GM12878 (cell line): ENCODE measurements at regions of chr3 and their contacts with region 1.

Region 1: GRCh38 chr3:196837819-196838420 is 29.8 kb upstream of the SENP5 start:
- DNase-seq: peak; percentile 20
- ATAC-seq: peak; percentile 96
- H3K4me3 ChIP-seq: no peak overlapping the region
- H3K27ac ChIP-seq: no peak overlapping the region
- H3K4me1 ChIP-seq: no peaks in the 10 kb centered on the region
- H3K27me3 ChIP-seq: no peaks in the 10 kb centered on the region
- CTCF ChIP-seq: peak; percentile 89 to 97 (median 94)
- EP300 ChIP-seq: no peak
- POLR2A ChIP-seq: no peak
- RAD21 ChIP-seq: peak; percentile 96

Region 2: DNA sequence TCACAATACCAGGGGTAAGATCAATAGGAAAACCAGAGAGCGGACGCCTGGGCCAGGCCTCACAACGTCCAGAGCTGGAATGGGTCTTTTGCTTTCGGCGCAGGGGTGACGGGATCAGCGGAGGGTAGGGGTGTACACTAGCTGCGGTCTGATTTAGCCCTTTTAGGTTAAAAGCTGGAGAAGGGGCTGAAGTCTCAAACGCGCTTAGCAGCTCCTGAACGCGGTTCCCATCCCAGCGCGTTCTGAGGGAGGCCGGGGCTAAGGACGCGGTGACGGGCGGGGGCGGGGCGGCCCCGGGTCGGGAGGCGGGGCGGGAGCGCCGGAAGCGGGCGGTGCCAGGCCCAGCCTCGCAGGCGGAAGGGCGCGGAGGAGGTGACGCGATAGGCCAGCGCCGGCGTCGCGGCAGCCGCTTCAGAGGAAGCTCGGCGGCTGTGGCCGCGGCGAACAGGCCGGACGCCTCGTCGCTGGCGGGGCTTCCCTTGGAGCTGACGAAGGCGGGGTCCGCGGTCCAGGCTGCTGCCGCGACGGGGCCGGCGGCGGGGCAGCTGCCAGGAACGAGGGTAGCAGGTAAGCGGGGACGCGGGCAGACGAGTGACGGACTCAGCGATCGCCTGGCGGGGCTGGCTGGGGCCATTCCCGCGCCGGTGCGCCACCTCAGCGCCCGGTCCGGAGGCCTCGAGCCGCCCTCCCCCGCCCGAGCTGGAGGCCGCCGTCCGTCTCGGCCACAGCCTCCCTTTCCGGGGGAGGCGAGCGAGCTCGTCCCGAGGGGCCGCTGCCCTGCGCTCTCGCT is 29.8 kb after region 1 on chr3 and contains the start of gene SENP5:
- CTCF ChIA-PET with region 1: interaction called, 12 read pairs
- POLR2A ChIA-PET with region 1: no interaction called
- RAD21 ChIA-PET with region 1: interaction called, 8 read pairs
- SMC1A ChIA-PET with region 1: interaction called, 5 read pairs
- in situ Hi-C with region 1: no loop called
- intact Hi-C with region 1: no loop called
- DNase-seq: peak; percentile 43
- ATAC-seq: peak; percentile 95
- H3K4me3 ChIP-seq: peak within 1 kb of the TSS; percentile 73
- H3K27ac ChIP-seq: peak within 1 kb of the TSS; percentile 82
- H3K4me1 ChIP-seq: peaks cover 4% of the 10 kb centered on the region; the same call in 1 of the 2 replicates
- H3K27me3 ChIP-seq: no peaks in the 10 kb centered on the region
- CTCF ChIP-seq: no peak
- EP300 ChIP-seq: no peak
- POLR2A ChIP-seq: peak; percentile 100
- RAD21 ChIP-seq: no peak
- polyA plus RNA-seq, gene SENP5: 6.4 to 9.6 TPM

Region 3: DNA sequence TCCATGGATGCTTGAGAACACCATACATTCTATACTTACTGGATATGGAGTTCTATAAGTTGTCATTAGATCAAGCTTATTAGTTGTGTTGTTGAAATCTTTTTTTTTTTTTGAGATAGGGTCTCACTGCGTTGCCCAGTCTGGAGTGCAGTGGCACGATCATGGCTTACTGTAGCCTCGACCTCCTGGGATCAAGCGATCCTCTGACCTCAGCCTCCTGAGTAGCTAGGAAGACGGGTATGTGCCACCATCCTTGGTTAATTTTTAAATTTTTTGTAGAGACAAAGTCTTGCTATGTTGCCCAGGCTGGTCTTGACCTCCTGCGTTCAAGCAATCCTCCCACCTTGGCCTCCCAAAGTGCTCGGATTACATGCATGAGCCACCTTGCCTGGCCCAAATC is 116.9 kb after region 1 on chr3:
- CTCF ChIA-PET with region 1: interaction called, 10 read pairs
- POLR2A ChIA-PET with region 1: interaction called, 3 read pairs
- RAD21 ChIA-PET with region 1: no interaction called
- SMC1A ChIA-PET with region 1: no interaction called
- in situ Hi-C with region 1: no loop called
- intact Hi-C with region 1: no loop called
- DNase-seq: no peak
- ATAC-seq: no peak
- H3K4me3 ChIP-seq: no peak overlapping the region
- H3K27ac ChIP-seq: no peak overlapping the region
- H3K4me1 ChIP-seq: no peaks in the 10 kb centered on the region
- H3K27me3 ChIP-seq: no peaks in the 10 kb centered on the region
- CTCF ChIP-seq: no peak
- EP300 ChIP-seq: no peak
- POLR2A ChIP-seq: no peak
- RAD21 ChIP-seq: no peak

Region 4: GRCh38 chr3:196969660-196970546 is 132.0 kb after region 1 on chr3:
- CTCF ChIA-PET with region 1: interaction called, 68 read pairs
- POLR2A ChIA-PET with region 1: no interaction called
- RAD21 ChIA-PET with region 1: interaction called, 30 read pairs
- SMC1A ChIA-PET with region 1: interaction called, 8 read pairs
- in situ Hi-C with region 1: no loop called
- intact Hi-C with region 1: loop called (anchors 1 kb)
- DNase-seq: no peak
- ATAC-seq: peak; percentile 85
- H3K4me3 ChIP-seq: peak overlapping the region; percentile 90
- H3K27ac ChIP-seq: peak overlapping the region; percentile 18; the same call in 1 of the 2 replicates
- H3K4me1 ChIP-seq: peaks cover 3% of the 10 kb centered on the region
- H3K27me3 ChIP-seq: no peaks in the 10 kb centered on the region; a peak in 1 of 4 replicates
- CTCF ChIP-seq: peak; percentile 61 to 82 (median 69); a peak in 5 of 6 replicates
- EP300 ChIP-seq: no peak
- POLR2A ChIP-seq: peak; percentile 45; the same call in 1 of the 2 replicates
- RAD21 ChIP-seq: peak; percentile 70

Region 5: GRCh38 chr3:197478746-197479668 is 641.1 kb after region 1 on chr3:
- CTCF ChIA-PET with region 1: no interaction called
- POLR2A ChIA-PET with region 1: no interaction called
- RAD21 ChIA-PET with region 1: no interaction called
- SMC1A ChIA-PET with region 1: no interaction called
- in situ Hi-C with region 1: no loop called
- intact Hi-C with region 1: no loop called
- DNase-seq: no peak
- ATAC-seq: no peak
- H3K4me3 ChIP-seq: no peak overlapping the region
- H3K27ac ChIP-seq: no peak overlapping the region
- H3K4me1 ChIP-seq: 0 out of 2 replicates have a peak, but pooled peaks cover 8% of the 10 kb centered on the region
- H3K27me3 ChIP-seq: no peaks in the 10 kb centered on the region
- CTCF ChIP-seq: no peak
- EP300 ChIP-seq: no peak
- POLR2A ChIP-seq: no peak
- RAD21 ChIP-seq: no peak